ENCODE measurements at regions of chr16 and their contacts with region 1.

Region 1: GRCh38 chr16:69532641-69533459 is 32.9 kb upstream of the NFAT5 start:
- DNase-seq: no peak
- ATAC-seq: no peak
- H3K4me3 ChIP-seq: no peak overlapping the region
- H3K27ac ChIP-seq: no peak overlapping the region
- H3K4me1 ChIP-seq: peaks cover 20% of the 10 kb centered on the region
- H3K27me3 ChIP-seq: no peaks in the 10 kb centered on the region
- CTCF ChIP-seq: no peak
- POLR2A ChIP-seq: no peak
- RAD21 ChIP-seq: no peak

Region 2: DNA sequence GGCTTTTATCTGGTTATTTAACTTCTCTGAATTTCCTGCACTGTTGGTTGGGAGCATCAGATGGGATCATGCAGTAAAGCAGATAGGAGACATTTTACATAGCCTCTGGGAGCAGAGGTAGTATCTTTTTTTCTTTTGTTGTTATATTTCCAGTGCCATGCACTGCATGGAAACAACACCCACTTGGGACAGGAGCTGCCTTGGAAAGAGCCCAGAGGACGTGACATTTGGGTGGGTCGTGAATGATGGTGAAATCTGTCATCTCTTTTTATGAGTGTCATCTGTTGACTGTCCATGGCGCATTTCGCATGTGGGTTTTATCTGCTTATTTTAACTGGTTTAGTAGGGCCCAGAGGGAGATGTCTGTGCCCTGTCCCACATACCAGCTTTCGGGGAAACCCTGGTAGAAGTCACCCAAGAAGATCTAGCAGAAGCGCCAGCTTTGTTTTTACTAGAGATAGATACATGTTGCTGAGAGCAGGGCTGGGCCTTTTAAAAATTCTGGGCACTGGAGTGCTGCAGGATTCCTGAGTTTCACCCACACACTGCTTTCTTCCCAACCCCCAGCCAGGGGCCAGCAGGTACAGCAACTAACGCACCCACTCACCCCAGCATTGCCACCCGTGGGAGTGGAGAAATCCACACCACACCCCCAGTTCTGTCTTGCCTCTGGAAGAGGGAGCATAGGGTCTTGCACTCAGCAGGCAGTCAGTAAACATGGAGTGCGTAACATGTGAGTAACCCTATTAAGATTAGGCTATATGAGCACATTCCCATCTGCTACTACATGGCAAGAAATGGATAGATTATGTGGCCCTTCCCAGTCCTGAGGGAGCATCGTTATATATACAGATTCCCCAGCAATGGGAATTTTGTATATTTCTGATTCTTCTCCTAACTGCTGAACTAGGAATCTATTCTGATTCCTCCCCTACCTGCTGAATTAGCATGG is 138.7 kb before region 1 on chr16:
- CTCF ChIA-PET with region 1: no interaction called
- POLR2A ChIA-PET with region 1: no interaction called
- dilution Hi-C with region 1: no loop called
- in situ Hi-C with region 1: no loop called
- intact Hi-C with region 1: no loop called
- DNase-seq: peak; percentile 37
- ATAC-seq: no peak
- H3K4me3 ChIP-seq: no peak overlapping the region
- H3K27ac ChIP-seq: no peak overlapping the region
- H3K4me1 ChIP-seq: peaks cover 10% of the 10 kb centered on the region
- H3K27me3 ChIP-seq: no peaks in the 10 kb centered on the region; the same call in 1 of the 2 replicates
- CTCF ChIP-seq: no peak
- POLR2A ChIP-seq: no peak
- RAD21 ChIP-seq: no peak

Region 3: GRCh38 chr16:69443927-69444631 is 88.8 kb before region 1 on chr16:
- CTCF ChIA-PET with region 1: no interaction called
- POLR2A ChIA-PET with region 1: no interaction called
- dilution Hi-C with region 1: no loop called
- in situ Hi-C with region 1: no loop called
- intact Hi-C with region 1: no loop called
- DNase-seq: peak; percentile 47
- ATAC-seq: peak; percentile 41; the same call in 1 of the 2 replicates
- H3K4me3 ChIP-seq: no peak overlapping the region; the same call in 1 of the 2 replicates
- H3K27ac ChIP-seq: peak overlapping the region; percentile 65; the same call in 1 of the 2 replicates
- H3K4me1 ChIP-seq: peaks cover 8% of the 10 kb centered on the region
- H3K27me3 ChIP-seq: no peaks in the 10 kb centered on the region
- CTCF ChIP-seq: no peak
- POLR2A ChIP-seq: no peak
- RAD21 ChIP-seq: no peak

Region 4: GRCh38 chr16:69486683-69487082 is 46.2 kb before region 1 on chr16:
- CTCF ChIA-PET with region 1: no interaction called
- POLR2A ChIA-PET with region 1: no interaction called
- dilution Hi-C with region 1: no loop called
- in situ Hi-C with region 1: no loop called
- intact Hi-C with region 1: no loop called
- DNase-seq: no peak
- ATAC-seq: no peak
- H3K4me3 ChIP-seq: no peak overlapping the region
- H3K27ac ChIP-seq: no peak overlapping the region
- H3K4me1 ChIP-seq: peaks cover 15% of the 10 kb centered on the region
- H3K27me3 ChIP-seq: no peaks in the 10 kb centered on the region
- CTCF ChIP-seq: no peak
- POLR2A ChIP-seq: no peak
- RAD21 ChIP-seq: no peak

Region 5: GRCh38 chr16:69542974-69543373 is 10.1 kb after region 1 on chr16:
- CTCF ChIA-PET with region 1: interaction called, 11 read pairs
- POLR2A ChIA-PET with region 1: no interaction called
- dilution Hi-C with region 1: no loop called
- in situ Hi-C with region 1: no loop called
- intact Hi-C with region 1: no loop called
- DNase-seq: peak; percentile 40
- ATAC-seq: no peak
- H3K4me3 ChIP-seq: no peak overlapping the region
- H3K27ac ChIP-seq: no peak overlapping the region
- H3K4me1 ChIP-seq: peaks cover 3% of the 10 kb centered on the region
- H3K27me3 ChIP-seq: no peaks in the 10 kb centered on the region
- CTCF ChIP-seq: no peak
- POLR2A ChIP-seq: no peak
- RAD21 ChIP-seq: no peak

Measured in IMR-90 (cell line).